MCF 10A (cell line): ENCODE measurements at regions of chr1 and their contacts with region 1.

Region 1: GRCh38 chr1:108877348-108878159 is 769 bp downstream of the GPSM2 start:
- DNase-seq: peak; percentile 48
- H3K4me3 Mint-ChIP-seq: peak overlapping the region; percentile 96
- H3K27ac Mint-ChIP-seq: peak overlapping the region; percentile 96
- H3K4me1 Mint-ChIP-seq: peaks cover 21% of the 10 kb centered on the region
- H3K27me3 Mint-ChIP-seq: no peaks in the 10 kb centered on the region
- CTCF ChIP-seq: no peak

Region 2: DNA sequence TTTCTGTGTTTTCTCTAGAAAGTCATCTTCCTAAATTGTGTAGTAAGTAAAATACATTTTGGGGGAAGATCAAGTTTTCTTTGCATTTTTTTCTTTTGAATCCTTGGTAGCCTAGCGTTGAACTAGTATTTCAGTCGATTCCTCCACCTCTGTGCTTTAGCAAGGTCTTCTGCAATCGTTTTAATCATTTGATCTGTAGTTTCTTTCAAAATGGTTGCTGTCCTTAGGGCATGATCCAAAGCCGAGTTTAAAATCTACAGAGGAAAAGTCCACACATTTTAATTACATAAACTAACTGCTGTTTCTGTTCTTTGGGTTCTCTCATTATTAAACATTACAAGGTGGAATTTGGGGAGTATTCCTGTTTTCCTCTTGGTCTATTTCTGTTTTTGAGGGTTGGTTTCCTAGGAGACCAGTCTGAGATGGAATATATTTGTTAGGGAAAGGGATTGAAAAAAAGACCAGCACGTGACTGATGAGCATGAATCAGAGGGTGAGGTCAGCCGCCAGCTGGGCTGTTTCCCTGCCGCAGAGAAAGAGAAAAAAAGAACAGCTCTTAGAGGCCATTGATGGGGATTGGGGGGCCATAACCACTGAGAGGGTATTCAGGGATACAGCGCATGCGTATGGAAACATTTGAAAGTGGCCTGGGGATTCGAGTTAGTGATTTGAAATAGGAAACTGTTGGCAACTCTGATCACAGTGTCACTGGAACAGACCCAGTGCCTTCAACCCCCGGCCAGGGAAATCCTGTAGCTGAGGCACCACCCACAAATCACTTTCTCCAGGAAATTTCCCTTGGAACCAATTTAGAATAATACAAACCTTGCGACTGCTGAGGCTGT is 61.3 kb before region 1 on chr1:
- CTCF ChIA-PET with region 1: no interaction called
- POLR2A ChIA-PET with region 1: interaction called, 10 read pairs
- intact Hi-C with region 1: no loop called
- DNase-seq: peak; percentile 69
- H3K4me3 Mint-ChIP-seq: peak overlapping the region; percentile 68
- H3K27ac Mint-ChIP-seq: peak overlapping the region; percentile 100
- H3K4me1 Mint-ChIP-seq: peaks cover 27% of the 10 kb centered on the region
- H3K27me3 Mint-ChIP-seq: no peaks in the 10 kb centered on the region
- CTCF ChIP-seq: no peak

Region 3: GRCh38 chr1:108846001-108846400 is 31.6 kb before region 1 on chr1:
- CTCF ChIA-PET with region 1: interaction called, 4 read pairs
- POLR2A ChIA-PET with region 1: interaction called, 29 read pairs
- intact Hi-C with region 1: no loop called
- DNase-seq: peak; percentile 85
- H3K4me3 Mint-ChIP-seq: no peak overlapping the region
- H3K27ac Mint-ChIP-seq: peak overlapping the region; percentile 89
- H3K4me1 Mint-ChIP-seq: peaks cover 38% of the 10 kb centered on the region
- H3K27me3 Mint-ChIP-seq: no peaks in the 10 kb centered on the region
- CTCF ChIP-seq: no peak

Region 4: DNA sequence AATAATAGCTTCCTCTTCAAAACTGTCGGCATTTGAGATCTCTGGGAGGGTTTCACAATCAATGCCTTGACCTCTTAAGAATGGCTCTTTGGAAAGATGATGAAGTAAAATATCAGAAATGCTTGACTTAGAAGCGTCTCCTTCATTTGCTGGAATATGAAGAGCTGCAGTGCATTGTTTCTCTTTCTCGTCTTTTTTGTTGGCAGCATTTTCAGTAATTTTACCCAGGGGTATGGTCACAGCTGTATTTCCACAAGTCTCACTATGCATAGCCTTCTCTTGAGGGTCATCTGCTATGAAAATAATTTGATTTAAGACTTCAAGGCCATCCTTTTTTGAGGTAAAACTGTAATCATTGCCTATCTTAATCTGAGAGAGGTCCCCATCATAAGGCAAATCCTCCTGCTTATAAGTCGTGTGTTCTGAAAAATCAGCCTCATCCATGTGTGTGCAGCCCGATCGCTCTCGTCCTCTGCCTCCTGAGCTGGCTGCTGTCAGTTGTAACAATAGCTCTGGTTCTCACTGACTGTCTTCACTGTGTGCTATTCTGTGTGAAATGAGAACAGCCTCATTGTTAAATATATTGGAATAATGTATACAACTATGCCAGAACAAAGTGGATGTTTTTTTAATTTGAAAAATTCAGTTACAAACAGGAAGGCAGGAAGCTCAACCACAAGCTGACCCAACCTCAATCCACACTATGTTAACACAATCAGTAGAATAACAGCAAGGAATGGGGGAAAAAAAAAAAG is 25.2 kb before region 1 on chr1:
- CTCF ChIA-PET with region 1: interaction called, 4 read pairs
- POLR2A ChIA-PET with region 1: interaction called, 29 read pairs
- intact Hi-C with region 1: no loop called
- DNase-seq: no peak
- H3K4me3 Mint-ChIP-seq: no peak overlapping the region
- H3K27ac Mint-ChIP-seq: no peak overlapping the region
- H3K4me1 Mint-ChIP-seq: peaks cover 20% of the 10 kb centered on the region
- H3K27me3 Mint-ChIP-seq: no peaks in the 10 kb centered on the region
- CTCF ChIP-seq: no peak

Region 5: GRCh38 chr1:108892356-108893140 is 15.0 kb after region 1 on chr1:
- CTCF ChIA-PET with region 1: interaction called, 53 read pairs
- POLR2A ChIA-PET with region 1: interaction called, 23 read pairs
- intact Hi-C with region 1: loop called (anchors 2 kb)
- DNase-seq: no peak
- H3K4me3 Mint-ChIP-seq: no peak overlapping the region
- H3K27ac Mint-ChIP-seq: peak overlapping the region; percentile 66
- H3K4me1 Mint-ChIP-seq: peaks cover 52% of the 10 kb centered on the region
- H3K27me3 Mint-ChIP-seq: no peaks in the 10 kb centered on the region
- CTCF ChIP-seq: no peak

Region 6: DNA sequence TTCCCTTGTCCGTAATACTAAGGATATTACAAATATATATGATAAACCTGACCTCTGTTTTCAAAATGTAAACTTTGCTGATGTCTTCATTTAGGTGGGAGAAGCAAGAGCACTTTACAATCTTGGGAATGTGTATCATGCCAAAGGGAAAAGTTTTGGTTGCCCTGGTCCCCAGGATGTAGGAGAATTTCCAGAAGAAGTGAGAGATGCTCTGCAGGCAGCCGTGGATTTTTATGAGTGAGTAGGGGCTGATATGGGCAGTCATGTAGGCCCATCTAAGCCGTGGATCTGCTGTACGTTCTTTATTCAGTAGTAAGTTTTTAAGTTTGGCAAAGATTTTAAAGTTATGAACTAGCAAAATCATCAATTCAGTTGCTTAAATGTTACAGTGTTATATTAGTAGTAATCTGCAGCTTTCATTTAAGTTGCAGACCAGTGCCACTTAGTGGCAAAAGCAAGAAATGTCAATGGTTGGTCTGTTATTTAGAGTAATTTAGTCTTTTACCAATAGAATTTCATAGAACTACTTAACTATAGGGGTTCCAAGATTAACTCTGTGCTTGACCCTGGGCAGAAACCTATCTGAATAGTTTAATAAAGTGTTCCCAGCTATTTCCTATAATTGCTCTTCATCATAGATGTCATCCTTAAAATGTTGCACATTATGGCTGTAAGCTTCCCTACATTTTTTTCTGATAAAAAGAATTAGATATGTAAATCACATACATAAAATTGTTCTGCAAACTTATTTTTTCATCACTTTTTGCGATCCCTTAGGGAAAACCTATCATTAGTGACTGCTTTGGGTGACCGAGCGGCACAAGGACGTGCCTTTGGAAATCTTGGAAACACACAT is 20.5 kb after region 1 on chr1:
- CTCF ChIA-PET with region 1: interaction called, 53 read pairs
- POLR2A ChIA-PET with region 1: interaction called, 23 read pairs
- intact Hi-C with region 1: loop called (anchors 2 kb)
- DNase-seq: peak; percentile 73
- H3K4me3 Mint-ChIP-seq: no peak overlapping the region
- H3K27ac Mint-ChIP-seq: peak overlapping the region; percentile 23
- H3K4me1 Mint-ChIP-seq: peaks cover 20% of the 10 kb centered on the region
- H3K27me3 Mint-ChIP-seq: no peaks in the 10 kb centered on the region
- CTCF ChIP-seq: peak; percentile 63

Region 7: DNA sequence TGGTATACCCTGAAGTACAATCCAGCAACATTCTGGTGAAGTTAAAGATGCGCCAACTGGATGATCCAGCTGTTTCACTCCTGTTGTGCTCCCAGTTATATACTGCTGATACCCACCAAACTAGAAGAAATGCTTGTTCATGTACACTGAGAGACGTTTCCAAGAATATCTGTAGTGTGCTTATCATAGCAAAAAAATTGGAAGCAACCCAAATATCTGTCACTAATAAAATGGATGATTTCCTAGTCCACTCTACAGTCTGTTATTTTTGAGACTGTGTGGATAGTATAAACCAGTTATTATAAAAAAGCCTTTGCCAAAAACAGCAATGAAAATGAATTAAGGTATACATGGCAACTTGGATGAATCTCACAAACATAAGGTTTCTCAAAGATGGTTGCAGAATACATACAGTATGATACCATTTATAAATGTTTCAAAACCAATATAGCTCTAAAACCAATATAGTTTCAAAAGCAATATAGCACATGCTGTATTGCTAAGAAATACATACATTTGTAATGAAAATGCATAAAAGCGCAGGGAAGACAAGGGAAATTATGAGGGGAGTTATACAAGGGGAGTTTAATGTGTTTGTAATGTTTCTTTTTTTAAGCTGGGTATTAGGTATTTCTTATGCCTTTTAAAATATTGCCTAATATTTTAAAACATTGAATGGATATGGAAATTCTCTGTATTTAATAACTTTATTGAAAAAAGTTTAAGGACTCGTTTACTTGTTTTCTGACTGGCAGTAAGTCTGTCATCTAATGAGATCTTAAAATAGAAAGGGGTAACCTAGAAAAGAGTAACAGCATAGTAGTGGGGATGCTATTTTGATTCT is 35.8 kb after region 1 on chr1:
- CTCF ChIA-PET with region 1: no interaction called
- POLR2A ChIA-PET with region 1: no interaction called
- intact Hi-C with region 1: no loop called
- DNase-seq: peak; percentile 13
- H3K4me3 Mint-ChIP-seq: no peak overlapping the region
- H3K27ac Mint-ChIP-seq: no peak overlapping the region
- H3K4me1 Mint-ChIP-seq: no peaks in the 10 kb centered on the region
- H3K27me3 Mint-ChIP-seq: no peaks in the 10 kb centered on the region
- CTCF ChIP-seq: no peak

Region 8: DNA sequence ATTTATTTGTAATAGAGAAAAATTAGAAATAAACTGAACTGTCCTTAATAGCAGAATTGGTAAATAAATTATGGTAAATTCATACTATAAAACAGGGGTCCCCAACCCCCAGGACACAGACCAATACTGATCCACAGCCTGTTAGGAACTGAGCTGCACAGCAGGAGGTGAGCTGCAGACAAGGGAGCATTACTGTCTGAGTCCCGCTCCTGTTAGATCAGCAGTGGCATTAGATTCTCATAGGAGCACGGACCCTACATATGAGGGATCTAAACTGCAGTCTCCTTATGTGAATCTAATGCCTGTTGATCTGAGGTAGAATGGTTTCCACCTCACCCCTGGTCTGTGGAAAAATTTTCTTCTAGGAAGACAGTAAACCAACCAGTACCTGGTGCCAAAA is 156.8 kb after region 1 on chr1:
- CTCF ChIA-PET with region 1: no interaction called
- POLR2A ChIA-PET with region 1: no interaction called
- intact Hi-C with region 1: no loop called
- DNase-seq: no peak
- H3K4me3 Mint-ChIP-seq: no peak overlapping the region
- H3K27ac Mint-ChIP-seq: no peak overlapping the region
- H3K4me1 Mint-ChIP-seq: no peaks in the 10 kb centered on the region
- H3K27me3 Mint-ChIP-seq: no peaks in the 10 kb centered on the region
- CTCF ChIP-seq: no peak